Activated B cell treated with CpG ODN at 0.5 μM for 24 hours (primary cell): ENCODE measurements at regions of chr12 and their contacts with region 1.

Region 1: DNA sequence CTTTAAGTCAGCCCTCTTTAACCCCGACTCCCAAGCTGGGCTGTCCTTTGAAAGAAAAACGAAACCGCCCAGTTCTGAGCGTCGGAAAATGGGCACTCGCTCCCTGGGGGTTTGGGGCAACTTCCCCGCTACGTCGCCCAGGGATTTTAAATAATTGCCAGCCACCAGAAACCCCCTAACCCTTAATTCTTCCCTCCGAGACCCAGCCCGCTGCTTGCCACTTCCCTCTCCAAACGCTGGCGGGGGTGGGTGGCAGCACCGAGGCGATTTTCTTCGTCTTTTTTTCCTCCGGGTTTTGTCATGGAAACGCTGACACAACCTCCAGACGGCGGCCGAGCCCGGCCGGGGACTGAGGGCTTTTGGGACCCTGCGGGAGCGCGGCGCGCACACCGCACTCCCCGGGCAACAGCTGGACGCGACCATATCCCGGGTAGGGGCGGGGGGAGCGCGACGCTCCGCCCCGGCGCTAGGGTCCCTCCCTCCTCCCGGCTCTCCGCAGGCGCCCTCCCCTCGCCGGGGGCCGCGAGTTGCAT is at the start of gene CHST11:
- DNase-seq: peak; percentile 71
- ATAC-seq: peak; percentile 70
- H3K4me3 Mint-ChIP-seq: peak within 1 kb of the TSS; percentile 99
- H3K27ac Mint-ChIP-seq: peak within 1 kb of the TSS; percentile 93
- H3K4me1 Mint-ChIP-seq: peaks cover 49% of the 10 kb centered on the region
- H3K27me3 Mint-ChIP-seq: no peaks in the 10 kb centered on the region
- CTCF ChIP-seq: no peak
- total RNA-seq, gene CHST11: 40.1 and 40.6 TPM in 2 replicates

Region 2: DNA sequence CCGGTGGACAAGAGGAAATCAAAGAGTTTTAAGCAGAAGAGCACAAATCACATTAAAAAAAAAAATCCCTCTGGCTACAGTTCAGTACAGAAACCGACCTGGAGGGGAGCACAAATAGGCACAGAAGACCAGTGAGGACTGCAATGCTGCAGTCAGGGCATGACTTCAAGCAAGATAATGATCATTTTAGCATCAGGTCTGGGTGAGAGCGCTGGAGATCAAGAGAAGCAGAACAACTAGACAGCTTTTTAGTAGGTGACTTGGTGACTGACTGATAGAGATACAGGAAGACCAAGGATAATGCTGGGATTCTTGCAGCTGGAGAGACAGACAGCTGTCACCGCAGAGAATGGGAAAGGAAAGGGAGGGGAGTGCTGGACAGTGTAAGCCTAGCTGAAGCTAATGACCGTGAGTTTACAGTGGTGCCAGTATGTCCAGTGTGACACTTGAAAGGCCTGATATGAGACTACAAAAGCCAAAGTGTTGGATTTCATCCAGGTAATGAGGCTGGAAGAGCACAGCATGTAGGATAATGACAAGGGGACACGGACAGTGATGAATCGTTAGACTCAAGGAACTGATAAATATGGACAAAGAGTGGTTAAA is 324.0 kb before region 1 on chr12:
- CTCF ChIA-PET with region 1: no interaction called
- POLR2A ChIA-PET with region 1: no interaction called
- intact Hi-C with region 1: no loop called
- DNase-seq: no peak
- ATAC-seq: no peak
- H3K4me3 Mint-ChIP-seq: no peak overlapping the region
- H3K27ac Mint-ChIP-seq: no peak overlapping the region
- H3K4me1 Mint-ChIP-seq: peaks cover 20% of the 10 kb centered on the region
- H3K27me3 Mint-ChIP-seq: no peaks in the 10 kb centered on the region
- CTCF ChIP-seq: no peak

Region 3: DNA sequence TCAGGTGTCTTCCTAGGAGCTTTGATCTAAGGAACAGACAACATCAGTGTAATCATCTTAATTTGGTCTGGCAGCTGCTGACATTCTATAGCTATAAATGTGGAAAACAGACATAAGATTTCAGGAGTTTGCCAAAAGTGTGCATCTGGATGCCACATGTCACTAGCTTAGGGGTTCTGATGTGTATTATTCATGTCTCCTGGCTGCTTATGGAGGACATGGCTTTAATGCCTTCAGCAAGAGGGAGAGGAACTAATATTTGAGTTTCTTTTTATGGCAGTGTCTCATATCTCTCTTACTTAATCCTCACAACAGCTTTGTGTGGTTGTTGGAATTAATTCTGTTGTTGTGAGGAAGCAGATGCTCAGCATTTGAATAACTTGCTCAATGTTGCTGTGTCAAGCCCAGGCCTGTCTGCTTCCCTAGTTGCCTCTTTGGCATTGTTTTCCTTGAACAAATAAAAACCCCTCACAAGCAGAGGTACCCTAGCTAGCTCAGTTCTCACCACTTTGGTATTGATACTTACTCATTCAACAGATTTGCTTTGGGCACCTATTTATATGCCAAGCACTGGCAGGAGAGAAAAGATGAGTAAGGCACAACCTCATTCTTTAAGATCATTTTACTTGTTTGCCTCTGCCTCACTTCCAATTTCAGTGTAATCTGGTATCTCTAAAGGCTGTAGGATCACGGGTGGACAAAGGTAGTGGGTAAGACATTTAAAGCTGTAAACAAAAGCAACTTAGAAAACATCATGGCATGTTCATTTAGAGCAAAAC is 192.7 kb before region 1 on chr12:
- CTCF ChIA-PET with region 1: no interaction called
- POLR2A ChIA-PET with region 1: no interaction called
- intact Hi-C with region 1: no loop called
- DNase-seq: no peak
- ATAC-seq: no peak
- H3K4me3 Mint-ChIP-seq: no peak overlapping the region
- H3K27ac Mint-ChIP-seq: no peak overlapping the region
- H3K4me1 Mint-ChIP-seq: no peaks in the 10 kb centered on the region
- H3K27me3 Mint-ChIP-seq: no peaks in the 10 kb centered on the region
- CTCF ChIP-seq: no peak

Region 4: GRCh38 chr12:104420868-104421267 is 35.6 kb before region 1 on chr12:
- CTCF ChIA-PET with region 1: no interaction called
- POLR2A ChIA-PET with region 1: no interaction called
- intact Hi-C with region 1: no loop called
- DNase-seq: no peak
- ATAC-seq: no peak
- H3K4me3 Mint-ChIP-seq: no peak overlapping the region
- H3K27ac Mint-ChIP-seq: no peak overlapping the region
- H3K4me1 Mint-ChIP-seq: peaks cover 12% of the 10 kb centered on the region
- H3K27me3 Mint-ChIP-seq: no peaks in the 10 kb centered on the region
- CTCF ChIP-seq: no peak

Region 5: DNA sequence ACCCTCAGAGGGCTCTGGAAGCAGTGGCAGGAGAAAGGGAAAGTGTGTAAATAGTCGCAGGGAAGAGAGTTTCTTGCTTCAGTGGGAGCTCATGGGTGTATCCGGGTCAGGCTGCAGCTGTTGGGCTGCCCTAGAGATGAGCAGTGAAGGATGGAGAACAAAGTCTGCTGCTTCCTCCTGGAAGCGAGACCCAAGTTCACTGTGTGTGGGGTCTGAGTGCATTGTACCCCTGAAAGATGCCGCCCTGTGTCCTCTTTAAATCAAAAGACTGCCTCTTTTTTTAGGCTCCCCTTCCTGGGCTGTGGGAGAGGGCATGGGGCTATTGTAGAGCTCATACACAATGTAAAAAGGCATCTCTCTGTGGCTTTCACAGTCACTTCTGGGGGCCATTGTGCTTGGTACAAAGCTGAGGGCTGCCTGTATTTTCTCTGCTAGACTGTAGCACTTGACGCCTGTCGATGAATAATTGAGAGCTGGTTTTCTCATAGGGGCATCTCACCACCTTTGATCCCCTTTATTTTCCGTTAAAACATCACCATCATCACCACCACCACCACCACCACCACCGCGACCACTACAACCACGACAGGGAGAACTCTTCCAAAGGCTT is 17.0 kb after region 1 on chr12:
- CTCF ChIA-PET with region 1: interaction called, 8 read pairs
- POLR2A ChIA-PET with region 1: interaction called, 64 read pairs
- intact Hi-C with region 1: loop called (anchors 2 kb)
- DNase-seq: no peak
- ATAC-seq: peak; percentile 84
- H3K4me3 Mint-ChIP-seq: peak overlapping the region; percentile 81
- H3K27ac Mint-ChIP-seq: peak overlapping the region; percentile 94
- H3K4me1 Mint-ChIP-seq: peaks cover 87% of the 10 kb centered on the region
- H3K27me3 Mint-ChIP-seq: no peaks in the 10 kb centered on the region
- CTCF ChIP-seq: no peak

Region 6: DNA sequence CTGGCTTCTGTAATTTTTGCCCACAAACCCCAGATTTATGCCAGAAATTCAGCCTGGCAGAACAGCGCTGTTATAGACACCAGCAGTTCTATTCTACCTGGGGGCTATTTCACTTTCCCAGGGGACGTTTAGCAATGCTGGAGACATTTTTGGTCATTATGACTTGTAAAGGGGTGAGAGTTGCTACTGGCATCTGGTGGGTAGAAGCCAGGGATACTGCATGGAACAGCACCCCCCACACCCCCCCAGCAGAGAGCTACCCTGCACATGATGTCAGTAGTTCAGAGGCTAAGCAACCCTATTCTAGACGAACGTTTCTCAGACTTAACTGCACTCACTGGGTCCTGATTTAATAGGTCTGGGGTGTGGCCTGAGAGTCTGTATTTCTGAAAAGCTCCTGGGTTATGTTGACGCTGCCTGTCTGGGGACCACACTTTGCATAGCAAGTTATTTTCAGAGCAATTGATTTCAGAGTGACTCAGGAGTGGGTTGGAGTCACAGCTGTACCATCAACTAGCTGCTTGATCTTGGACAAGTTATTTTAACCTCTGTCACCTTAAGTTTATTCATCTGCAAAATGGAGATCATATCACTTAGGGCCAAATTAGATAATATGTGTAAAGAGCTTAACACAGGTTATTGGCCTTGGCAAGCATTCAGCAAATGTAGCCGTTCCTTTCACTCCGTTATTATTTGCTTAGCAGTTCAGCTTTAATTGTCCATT is 48.8 kb after region 1 on chr12:
- CTCF ChIA-PET with region 1: interaction called, 3 read pairs
- POLR2A ChIA-PET with region 1: interaction called, 13 read pairs
- intact Hi-C with region 1: loop called (anchors 5 kb)
- DNase-seq: no peak
- ATAC-seq: peak; percentile 90
- H3K4me3 Mint-ChIP-seq: peak overlapping the region; percentile 21
- H3K27ac Mint-ChIP-seq: no peak overlapping the region
- H3K4me1 Mint-ChIP-seq: peaks cover 96% of the 10 kb centered on the region
- H3K27me3 Mint-ChIP-seq: no peaks in the 10 kb centered on the region
- CTCF ChIP-seq: no peak

Region 7: GRCh38 chr12:104569346-104570173 is 113.1 kb after region 1 on chr12:
- CTCF ChIA-PET with region 1: interaction called, 4 read pairs
- POLR2A ChIA-PET with region 1: interaction called, 75 read pairs
- intact Hi-C with region 1: loop called (anchors 1 kb)
- DNase-seq: peak; percentile 37
- ATAC-seq: peak; percentile 75
- H3K4me3 Mint-ChIP-seq: peak overlapping the region; percentile 55
- H3K27ac Mint-ChIP-seq: peak overlapping the region; percentile 82
- H3K4me1 Mint-ChIP-seq: peaks cover 73% of the 10 kb centered on the region
- H3K27me3 Mint-ChIP-seq: no peaks in the 10 kb centered on the region
- CTCF ChIP-seq: no peak

Region 8: DNA sequence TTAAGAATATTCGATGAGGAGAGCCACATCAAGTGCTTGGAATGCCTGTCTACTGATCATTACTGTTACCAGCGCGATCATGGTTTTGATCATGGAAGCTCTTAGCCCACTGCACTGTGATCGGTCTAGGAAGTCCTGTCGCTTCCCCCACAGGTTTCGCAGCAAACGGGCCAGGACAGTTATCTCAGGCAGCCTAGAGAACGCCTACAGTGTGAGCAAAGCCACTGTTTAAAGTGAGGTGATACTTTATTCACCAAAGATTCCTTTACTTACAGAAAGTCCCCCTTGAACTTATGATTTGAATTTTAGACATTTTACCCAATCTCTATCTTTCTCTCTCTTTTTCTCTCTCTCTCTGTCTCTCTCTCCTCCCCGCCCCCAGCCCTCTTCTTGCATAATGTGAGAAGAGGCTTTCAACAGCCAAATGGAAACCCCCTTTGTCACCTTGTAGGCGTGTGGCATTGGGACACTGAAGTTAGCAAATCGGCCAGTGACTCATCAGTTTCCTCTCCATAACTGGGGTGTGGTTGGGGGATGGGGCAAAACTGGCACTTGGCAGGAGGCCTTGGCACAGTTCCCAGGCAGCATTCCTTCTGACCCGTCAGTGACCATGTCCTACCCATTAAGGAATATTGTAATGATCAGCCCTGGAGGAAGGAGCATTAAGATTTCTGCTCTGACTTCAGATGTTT is 215.1 kb after region 1 on chr12:
- CTCF ChIA-PET with region 1: interaction called, 3 read pairs
- POLR2A ChIA-PET with region 1: interaction called, 35 read pairs
- intact Hi-C with region 1: loop called (anchors 1 kb)
- DNase-seq: peak; percentile 53
- ATAC-seq: peak; percentile 82
- H3K4me3 Mint-ChIP-seq: peak overlapping the region; percentile 71
- H3K27ac Mint-ChIP-seq: peak overlapping the region; percentile 92
- H3K4me1 Mint-ChIP-seq: peaks cover 80% of the 10 kb centered on the region
- H3K27me3 Mint-ChIP-seq: no peaks in the 10 kb centered on the region
- CTCF ChIP-seq: no peak

Region 9: GRCh38 chr12:104805186-104805585 is 348.7 kb after region 1 on chr12:
- CTCF ChIA-PET with region 1: no interaction called
- POLR2A ChIA-PET with region 1: no interaction called
- intact Hi-C with region 1: no loop called
- DNase-seq: no peak
- ATAC-seq: no peak
- H3K4me3 Mint-ChIP-seq: no peak overlapping the region
- H3K27ac Mint-ChIP-seq: no peak overlapping the region
- H3K4me1 Mint-ChIP-seq: peaks cover 11% of the 10 kb centered on the region
- H3K27me3 Mint-ChIP-seq: peaks cover 2% of the 10 kb centered on the region
- CTCF ChIP-seq: no peak

Region 10: GRCh38 chr12:104958009-104958945 is 501.8 kb after region 1 on chr12 and contains the start of gene SLC41A2:
- CTCF ChIA-PET with region 1: no interaction called
- POLR2A ChIA-PET with region 1: no interaction called
- intact Hi-C with region 1: loop called (anchors 1 kb)
- DNase-seq: peak; percentile 90
- ATAC-seq: peak; percentile 86
- H3K4me3 Mint-ChIP-seq: peak within 1 kb of the TSS; percentile 93
- H3K27ac Mint-ChIP-seq: peak within 1 kb of the TSS; percentile 92
- H3K4me1 Mint-ChIP-seq: peaks cover 26% of the 10 kb centered on the region
- H3K27me3 Mint-ChIP-seq: peaks cover 2% of the 10 kb centered on the region
- CTCF ChIP-seq: no peak
- total RNA-seq, gene SLC41A2: 11.1 and 12.6 TPM in 2 replicates